Stomach (tissue), 19 donors: ENCODE measurements at regions of chr12 and their contacts with region 1.

Region 1: GRCh38 chr12:64256166-64256800 is 34.2 kb upstream of the KICS2 start:
- DNase-seq: peak in 1 of 2 donors; percentile 81
- H3K4me3 ChIP-seq: no peak overlapping the region
- H3K27ac ChIP-seq: no peak overlapping the region
- H3K4me1 ChIP-seq: no peaks in the 10 kb centered on the region
- H3K27me3 ChIP-seq: no peaks in the 10 kb centered on the region
- CTCF ChIP-seq: peak in 5 of 7 experiments; percentile 21 to 68 (median 58)
- EP300 ChIP-seq: no peak
- POLR2A ChIP-seq: no peak

Region 2: DNA sequence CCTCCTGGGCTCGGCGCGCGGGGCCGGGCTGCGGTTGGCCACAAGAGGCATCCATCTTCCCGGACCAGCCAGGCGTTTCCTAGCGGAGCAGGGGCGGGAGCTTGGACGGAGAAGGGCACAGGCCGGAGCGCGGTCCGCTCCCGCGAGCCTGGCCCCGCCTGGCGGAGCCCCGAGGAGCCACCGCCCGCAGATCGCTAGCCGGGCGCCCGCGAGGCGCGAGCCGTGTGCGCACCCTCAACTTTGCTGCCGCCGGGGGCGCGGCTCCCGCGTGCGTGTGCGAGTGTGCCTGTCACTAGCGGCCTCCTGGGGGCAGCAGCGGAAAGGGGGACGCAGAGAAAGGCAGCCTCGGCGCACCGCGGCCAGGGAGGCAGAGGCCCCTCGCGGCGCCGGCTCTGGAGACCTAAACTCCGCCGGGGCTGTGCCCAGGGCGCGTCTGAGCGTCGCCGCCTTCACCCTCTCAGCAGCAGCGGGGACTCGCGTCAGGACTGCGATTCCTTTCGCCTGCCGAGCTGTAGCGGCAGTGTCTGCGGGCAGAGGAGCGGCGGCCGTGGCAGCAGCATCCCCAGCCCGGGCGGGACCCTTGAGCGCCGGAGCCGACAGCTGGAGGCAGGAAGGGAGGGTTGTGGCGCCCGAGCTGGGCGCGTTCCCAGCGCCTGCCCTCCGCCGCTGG is 412.4 kb before region 1 on chr12:
- intact Hi-C with region 1: loop called (anchors 5 kb)
- DNase-seq: peak; percentile 88 to 98
- H3K4me3 ChIP-seq: peak overlapping the region; percentile 71 to 89 (median 78)
- H3K27ac ChIP-seq: peak overlapping the region; percentile 91 to 97 (median 93)
- H3K4me1 ChIP-seq: peaks cover 8 to 42% (median 17%) of the 10 kb centered on the region in 4 donors
- H3K27me3 ChIP-seq: peaks cover 0 to 3% (median 0%) of the 10 kb centered on the region in 3 donors
- CTCF ChIP-seq: peak in 5 of 7 experiments; percentile 75 to 95 (median 89)
- EP300 ChIP-seq: no peak
- POLR2A ChIP-seq: no peak

Region 3: GRCh38 chr12:64181504-64182291 is 74.6 kb before region 1 on chr12:
- intact Hi-C with region 1: loop called (anchors 10 kb)
- DNase-seq: peak; percentile 44 to 82
- H3K4me3 ChIP-seq: no peak overlapping the region
- H3K27ac ChIP-seq: peak overlapping the region in 4 of 5 donors; percentile 31 to 75 (median 54)
- H3K4me1 ChIP-seq: peaks cover 0 to 20% (median 8%) of the 10 kb centered on the region in 4 donors
- H3K27me3 ChIP-seq: no peaks in the 10 kb centered on the region
- CTCF ChIP-seq: peak in 5 of 7 experiments; percentile 43 to 66 (median 52)
- EP300 ChIP-seq: no peak
- POLR2A ChIP-seq: no peak